SK-N-SH (cell line): ENCODE measurements at regions of chr18 and their contacts with region 1.

Region 1: GRCh38 chr18:12236934-12237832 is 17.0 kb upstream of the CIDEA start:
- DNase-seq: peak; percentile 90
- H3K4me3 ChIP-seq: peak overlapping the region in 1 of 2 experiments; percentile 24; a peak in 1 of 4 replicates
- H3K27ac ChIP-seq: no peak overlapping the region
- H3K4me1 ChIP-seq: peaks cover 0 to 3% of the 10 kb centered on the region in 2 experiments; a peak in 1 of 4 replicates
- H3K27me3 ChIP-seq: peaks cover 69% of the 10 kb centered on the region; the same call in 1 of the 2 replicates
- CTCF ChIP-seq: peak; percentile 90
- EP300 ChIP-seq: no peak
- RAD21 ChIP-seq: peak; percentile 56

Region 2: GRCh38 chr18:12005538-12006487 is 231.4 kb before region 1 on chr18:
- CTCF ChIA-PET with region 1: no interaction called
- POLR2A ChIA-PET with region 1: no interaction called
- DNase-seq: no peak
- H3K4me3 ChIP-seq: no peak overlapping the region
- H3K27ac ChIP-seq: no peak overlapping the region
- H3K4me1 ChIP-seq: no peaks in the 10 kb centered on the region
- H3K27me3 ChIP-seq: peaks cover 73% of the 10 kb centered on the region
- CTCF ChIP-seq: no peak
- EP300 ChIP-seq: no peak
- RAD21 ChIP-seq: no peak

Region 3: GRCh38 chr18:12254136-12254829 is 17.1 kb after region 1 on chr18 and contains the start of gene CIDEA:
- CTCF ChIA-PET with region 1: interaction called, 17 read pairs
- POLR2A ChIA-PET with region 1: no interaction called
- DNase-seq: no peak
- H3K4me3 ChIP-seq: no peak within 1 kb of the TSS
- H3K27ac ChIP-seq: no peak within 1 kb of the TSS
- H3K4me1 ChIP-seq: no peaks in the 10 kb centered on the region; a peak in 1 of 4 replicates
- H3K27me3 ChIP-seq: peaks cover 86% of the 10 kb centered on the region
- CTCF ChIP-seq: no peak
- EP300 ChIP-seq: no peak
- RAD21 ChIP-seq: no peak
- polyA plus RNA-seq, gene CIDEA: not detected in 2 replicates

Region 4: DNA sequence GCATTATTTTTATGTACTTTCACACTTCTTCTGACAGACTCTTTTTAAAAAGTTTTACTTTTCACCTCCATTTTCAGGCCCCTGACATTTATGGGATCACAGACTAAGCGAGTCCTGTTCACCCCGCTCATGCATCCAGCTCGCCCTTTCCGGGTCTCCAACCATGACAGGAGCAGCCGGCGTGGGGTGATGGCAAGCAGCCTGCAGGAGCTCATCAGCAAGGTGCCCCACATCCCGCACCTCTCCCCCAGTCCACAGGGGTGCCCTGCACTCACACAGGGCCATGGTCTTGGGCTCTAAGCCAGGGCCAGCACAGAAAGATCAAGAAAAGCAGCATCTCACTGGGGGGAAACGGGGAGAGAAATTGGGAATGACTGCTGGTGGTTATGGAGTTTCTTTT is 25.6 kb after region 1 on chr18:
- CTCF ChIA-PET with region 1: interaction called, 10 read pairs
- POLR2A ChIA-PET with region 1: no interaction called
- DNase-seq: no peak
- H3K4me3 ChIP-seq: no peak overlapping the region
- H3K27ac ChIP-seq: no peak overlapping the region
- H3K4me1 ChIP-seq: no peaks in the 10 kb centered on the region
- H3K27me3 ChIP-seq: peaks cover 94% of the 10 kb centered on the region
- CTCF ChIP-seq: no peak
- EP300 ChIP-seq: no peak
- RAD21 ChIP-seq: no peak